Mammary epithelial cell (primary cell): ENCODE measurements at regions of chr9 and their contacts with region 1.

Region 1: DNA sequence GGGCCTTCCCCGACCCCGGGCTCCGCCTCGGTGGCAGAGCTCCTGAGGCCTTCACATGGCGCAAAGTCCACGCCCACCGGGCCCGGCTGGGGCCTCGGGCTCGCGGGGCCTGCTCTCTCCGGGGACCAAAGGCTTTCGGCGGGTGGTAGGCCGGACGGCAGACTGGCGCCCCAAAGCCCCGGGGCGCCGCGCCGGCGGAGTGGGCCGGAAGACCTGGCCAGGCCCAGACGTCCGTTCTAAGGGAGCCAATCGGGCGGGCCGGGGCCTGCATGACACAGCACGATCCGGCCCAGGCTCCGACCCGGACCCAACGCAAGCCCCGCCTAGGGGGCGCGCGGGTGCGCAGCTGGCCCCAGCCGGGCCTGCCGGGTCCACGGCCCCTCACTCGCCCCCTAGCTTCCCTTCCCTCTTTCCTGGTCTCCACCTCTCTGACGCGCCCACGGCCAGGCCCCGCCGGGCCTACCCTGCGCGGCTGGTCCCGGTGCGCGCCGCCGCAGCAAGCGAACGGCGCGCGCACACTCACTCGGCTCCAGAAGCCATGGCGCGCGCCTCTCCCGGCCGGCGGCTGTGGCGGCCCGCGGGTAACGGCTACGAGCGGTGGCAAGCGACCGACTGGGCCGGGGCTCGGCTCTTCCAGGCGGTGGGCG is 488 bp downstream of the VCP start:
- DNase-seq: peak; percentile 86
- H3K4me3 ChIP-seq: peak overlapping the region; percentile 92 to 95 (median 94)
- H3K27ac ChIP-seq: peak overlapping the region; percentile 92
- H3K4me1 ChIP-seq: peaks cover 34% of the 10 kb centered on the region
- H3K27me3 ChIP-seq: no peaks in the 10 kb centered on the region
- CTCF ChIP-seq: peak in 1 of 2 donors; percentile 38

Region 2: GRCh38 chr9:34994260-34994899 is 77.6 kb before region 1 on chr9:
- CTCF ChIA-PET with region 1: interaction called, 3 read pairs
- dilution Hi-C with region 1: no loop called
- in situ Hi-C with region 1: no loop called
- intact Hi-C with region 1: loop called (anchors 5 kb)
- DNase-seq: peak; percentile 43
- H3K4me3 ChIP-seq: no peak overlapping the region
- H3K27ac ChIP-seq: no peak overlapping the region
- H3K4me1 ChIP-seq: peaks cover 36% of the 10 kb centered on the region
- H3K27me3 ChIP-seq: no peaks in the 10 kb centered on the region
- CTCF ChIP-seq: peak; percentile 82

Region 3: GRCh38 chr9:35051069-35051967 is 20.6 kb before region 1 on chr9:
- CTCF ChIA-PET with region 1: interaction called, 12 read pairs
- dilution Hi-C with region 1: no loop called
- in situ Hi-C with region 1: no loop called
- intact Hi-C with region 1: no loop called
- DNase-seq: peak; percentile 27
- H3K4me3 ChIP-seq: no peak overlapping the region
- H3K27ac ChIP-seq: no peak overlapping the region
- H3K4me1 ChIP-seq: peaks cover 4% of the 10 kb centered on the region
- H3K27me3 ChIP-seq: no peaks in the 10 kb centered on the region
- CTCF ChIP-seq: peak; percentile 61 to 68

Region 4: GRCh38 chr9:35096035-35096849 is 24.3 kb after region 1 on chr9 and contains the start of gene PIGO:
- CTCF ChIA-PET with region 1: no interaction called
- dilution Hi-C with region 1: no loop called
- in situ Hi-C with region 1: no loop called
- intact Hi-C with region 1: loop called (anchors 1 kb)
- DNase-seq: peak; percentile 84
- H3K4me3 ChIP-seq: peak within 1 kb of the TSS; percentile 76 to 100 (median 82)
- H3K27ac ChIP-seq: peak within 1 kb of the TSS; percentile 91
- H3K4me1 ChIP-seq: peaks cover 7% of the 10 kb centered on the region
- H3K27me3 ChIP-seq: no peaks in the 10 kb centered on the region
- CTCF ChIP-seq: peak; percentile 93
- total RNA-seq, gene PIGO: 17.8 to 33.3 TPM